GM12878 (cell line): ENCODE measurements at regions of chr20 and their contacts with region 1.

Region 1: DNA sequence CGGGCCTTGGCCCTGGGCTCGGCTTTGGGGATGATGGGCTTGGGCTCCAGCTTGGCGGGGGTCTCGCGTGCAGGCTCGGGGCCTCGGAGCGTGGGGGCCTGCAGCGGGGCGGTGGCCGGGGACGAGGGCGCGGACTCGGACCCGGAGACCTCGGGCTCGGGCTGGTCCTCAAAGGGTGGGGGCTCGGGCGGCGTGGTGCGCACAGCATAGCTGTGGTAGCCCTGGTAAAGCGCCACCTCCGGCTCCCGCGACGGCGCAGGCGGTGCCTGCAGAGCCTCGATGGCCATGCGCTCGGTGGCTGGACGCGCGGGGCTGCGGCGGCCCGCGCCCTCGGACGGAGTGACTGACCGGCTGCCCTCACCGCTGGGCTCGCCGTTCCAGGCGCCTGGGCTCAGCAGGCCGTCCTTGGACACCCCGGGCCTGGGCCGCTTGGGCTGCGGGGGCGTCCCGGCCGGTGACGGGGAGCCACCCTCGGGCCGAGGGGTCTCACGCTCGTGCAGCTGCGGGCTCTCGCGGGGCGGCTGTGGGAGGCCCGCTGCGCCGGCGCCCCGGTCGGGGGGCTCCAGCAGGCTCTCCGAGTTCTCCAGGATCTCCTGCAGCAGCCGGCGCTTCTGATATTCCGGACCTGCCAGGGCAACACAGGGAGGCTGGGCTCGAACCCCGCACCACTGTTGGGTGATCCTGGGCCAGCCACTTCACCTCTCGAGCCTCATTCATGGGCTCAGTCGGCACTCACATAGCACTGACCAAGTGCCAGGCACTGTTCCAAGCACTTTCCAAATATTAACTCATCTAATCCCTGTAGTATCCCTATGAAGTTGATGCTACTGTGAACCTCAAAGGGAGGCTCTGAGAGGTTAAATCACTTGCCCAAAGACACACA is 71.0 kb downstream of the JPH2 start:
- DNase-seq: no peak
- ATAC-seq: no peak
- H3K4me3 ChIP-seq: no peak overlapping the region
- H3K27ac ChIP-seq: no peak overlapping the region
- H3K4me1 ChIP-seq: no peaks in the 10 kb centered on the region
- H3K27me3 ChIP-seq: peaks cover 0 to 2% of the 10 kb centered on the region in 2 experiments; a peak in 2 of 4 replicates
- CTCF ChIP-seq: no peak
- EP300 ChIP-seq: no peak
- POLR2A ChIP-seq: no peak
- RAD21 ChIP-seq: no peak

Region 2: GRCh38 chr20:44129911-44130718 is 14.1 kb after region 1 on chr20:
- CTCF ChIA-PET with region 1: interaction called, 10 read pairs
- POLR2A ChIA-PET with region 1: no interaction called
- RAD21 ChIA-PET with region 1: interaction called, 3 read pairs
- SMC1A ChIA-PET with region 1: no interaction called
- in situ Hi-C with region 1: no loop called
- intact Hi-C with region 1: no loop called
- DNase-seq: no peak
- ATAC-seq: no peak
- H3K4me3 ChIP-seq: no peak overlapping the region
- H3K27ac ChIP-seq: no peak overlapping the region
- H3K4me1 ChIP-seq: peaks cover 3% of the 10 kb centered on the region; the same call in 1 of the 2 replicates
- H3K27me3 ChIP-seq: 0 out of 4 replicates have a peak, but pooled peaks cover 0 to 1% of the 10 kb centered on the region in 2 experiments
- CTCF ChIP-seq: no peak
- EP300 ChIP-seq: no peak
- POLR2A ChIP-seq: no peak
- RAD21 ChIP-seq: no peak

Region 3: GRCh38 chr20:44166477-44166876 is 50.5 kb after region 1 on chr20:
- CTCF ChIA-PET with region 1: interaction called, 17 read pairs
- POLR2A ChIA-PET with region 1: no interaction called
- RAD21 ChIA-PET with region 1: no interaction called
- SMC1A ChIA-PET with region 1: interaction called, 3 read pairs
- in situ Hi-C with region 1: no loop called
- intact Hi-C with region 1: no loop called
- DNase-seq: no peak
- ATAC-seq: no peak
- H3K4me3 ChIP-seq: no peak overlapping the region
- H3K27ac ChIP-seq: no peak overlapping the region
- H3K4me1 ChIP-seq: no peaks in the 10 kb centered on the region
- H3K27me3 ChIP-seq: peaks cover 3 to 6% of the 10 kb centered on the region in 2 experiments; a peak in 2 of 4 replicates
- CTCF ChIP-seq: no peak
- EP300 ChIP-seq: no peak
- POLR2A ChIP-seq: no peak
- RAD21 ChIP-seq: no peak

Region 4: DNA sequence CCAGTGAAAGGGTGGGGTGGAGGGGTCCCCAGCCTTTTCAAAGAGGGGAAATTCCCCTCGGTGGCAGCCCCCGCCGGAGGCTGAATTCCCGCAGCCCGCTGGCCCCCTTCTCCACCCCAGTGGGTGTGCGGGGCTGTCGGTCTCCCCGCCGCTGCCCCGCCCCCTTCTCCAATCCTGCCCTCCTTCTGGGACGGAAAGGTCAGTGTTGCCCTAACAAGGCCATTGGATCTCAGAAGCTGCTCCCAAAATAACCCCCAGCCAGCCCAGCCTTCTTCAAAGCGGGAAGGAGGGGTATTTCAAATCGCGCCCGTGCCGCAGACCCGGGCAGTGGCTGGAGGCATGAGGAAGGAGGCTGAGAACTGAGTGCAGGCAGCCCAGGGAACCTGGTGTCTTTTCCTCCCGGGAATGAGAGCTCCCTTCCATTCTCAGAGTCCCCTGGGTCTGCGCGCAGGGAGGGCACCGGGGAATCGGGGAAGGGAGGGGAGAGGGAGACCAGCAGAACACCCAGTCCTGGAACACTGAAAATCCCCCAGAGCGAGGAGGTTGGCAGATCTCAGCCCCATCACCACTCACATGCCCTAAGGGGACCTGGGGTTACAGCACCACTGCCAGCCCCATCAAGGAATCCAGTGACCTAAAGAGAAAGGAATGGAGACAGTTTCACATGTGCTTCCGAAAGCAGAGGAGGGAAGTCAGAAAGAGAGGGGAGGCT is 71.2 kb after region 1 on chr20 and contains the start of gene JPH2:
- CTCF ChIA-PET with region 1: interaction called, 196 read pairs
- POLR2A ChIA-PET with region 1: no interaction called
- RAD21 ChIA-PET with region 1: interaction called, 69 read pairs
- SMC1A ChIA-PET with region 1: interaction called, 51 read pairs
- in situ Hi-C with region 1: loop called (anchors 5 kb)
- intact Hi-C with region 1: loop called (anchors 1 kb)
- DNase-seq: no peak
- ATAC-seq: peak; percentile 21; the same call in 2 of the 3 replicates
- H3K4me3 ChIP-seq: no peak within 1 kb of the TSS
- H3K27ac ChIP-seq: no peak within 1 kb of the TSS
- H3K4me1 ChIP-seq: no peaks in the 10 kb centered on the region
- H3K27me3 ChIP-seq: peaks cover 6 to 12% of the 10 kb centered on the region in 2 experiments; a peak in 3 of 4 replicates
- CTCF ChIP-seq: no peak
- EP300 ChIP-seq: no peak
- POLR2A ChIP-seq: no peak
- RAD21 ChIP-seq: no peak
- polyA plus RNA-seq, gene JPH2: not detected

Region 5: GRCh38 chr20:44196271-44196670 is 80.3 kb after region 1 on chr20:
- CTCF ChIA-PET with region 1: interaction called, 196 read pairs
- POLR2A ChIA-PET with region 1: no interaction called
- RAD21 ChIA-PET with region 1: interaction called, 69 read pairs
- SMC1A ChIA-PET with region 1: interaction called, 51 read pairs
- in situ Hi-C with region 1: no loop called
- intact Hi-C with region 1: no loop called
- DNase-seq: no peak
- ATAC-seq: peak; percentile 37; the same call in 2 of the 3 replicates
- H3K4me3 ChIP-seq: no peak overlapping the region
- H3K27ac ChIP-seq: no peak overlapping the region
- H3K4me1 ChIP-seq: no peaks in the 10 kb centered on the region
- H3K27me3 ChIP-seq: no peaks in the 10 kb centered on the region
- CTCF ChIP-seq: peak in 1 of 3 experiments; percentile 15; a peak in 2 of 6 replicates
- EP300 ChIP-seq: no peak
- POLR2A ChIP-seq: no peak
- RAD21 ChIP-seq: no peak

Region 6: GRCh38 chr20:44310664-44311639 is 194.9 kb after region 1 on chr20 and contains the start of gene FITM2:
- CTCF ChIA-PET with region 1: interaction called, 5 read pairs
- POLR2A ChIA-PET with region 1: no interaction called
- RAD21 ChIA-PET with region 1: interaction called, 4 read pairs
- SMC1A ChIA-PET with region 1: interaction called, 13 read pairs
- in situ Hi-C with region 1: no loop called
- intact Hi-C with region 1: no loop called
- DNase-seq: peak; percentile 84
- ATAC-seq: peak; percentile 96
- H3K4me3 ChIP-seq: peak within 1 kb of the TSS; percentile 90
- H3K27ac ChIP-seq: peak within 1 kb of the TSS; percentile 57
- H3K4me1 ChIP-seq: no peaks in the 10 kb centered on the region
- H3K27me3 ChIP-seq: no peaks in the 10 kb centered on the region
- CTCF ChIP-seq: peak; percentile 95 to 99 (median 96); a peak in 5 of 6 replicates
- EP300 ChIP-seq: no peak
- POLR2A ChIP-seq: peak; percentile 80
- RAD21 ChIP-seq: peak; percentile 80
- polyA plus RNA-seq, gene FITM2: 0.46 to 0.61 TPM